ENCODE measurements at regions of chr2 and their contacts with region 1.

Region 1: GRCh38 chr2:218209078-218209477 is 7.9 kb upstream of the ARPC2 start:
- DNase-seq: no peak
- H3K4me3 ChIP-seq: no peak overlapping the region
- H3K27ac ChIP-seq: no peak overlapping the region
- H3K4me1 ChIP-seq: no peaks in the 10 kb centered on the region
- H3K27me3 ChIP-seq: 0 out of 2 replicates have a peak, but pooled peaks cover 3% of the 10 kb centered on the region
- CTCF ChIP-seq: no peak

Region 2: GRCh38 chr2:218343591-218343990 is 134.5 kb after region 1 on chr2:
- CTCF ChIA-PET with region 1: interaction called, 10 read pairs
- POLR2A ChIA-PET with region 1: no interaction called
- intact Hi-C with region 1: no loop called
- DNase-seq: no peak
- H3K4me3 ChIP-seq: no peak overlapping the region
- H3K27ac ChIP-seq: no peak overlapping the region
- H3K4me1 ChIP-seq: no peaks in the 10 kb centered on the region
- H3K27me3 ChIP-seq: no peaks in the 10 kb centered on the region
- CTCF ChIP-seq: no peak